ENCODE measurements at regions of chrX and their contacts with region 1.

Region 1: DNA sequence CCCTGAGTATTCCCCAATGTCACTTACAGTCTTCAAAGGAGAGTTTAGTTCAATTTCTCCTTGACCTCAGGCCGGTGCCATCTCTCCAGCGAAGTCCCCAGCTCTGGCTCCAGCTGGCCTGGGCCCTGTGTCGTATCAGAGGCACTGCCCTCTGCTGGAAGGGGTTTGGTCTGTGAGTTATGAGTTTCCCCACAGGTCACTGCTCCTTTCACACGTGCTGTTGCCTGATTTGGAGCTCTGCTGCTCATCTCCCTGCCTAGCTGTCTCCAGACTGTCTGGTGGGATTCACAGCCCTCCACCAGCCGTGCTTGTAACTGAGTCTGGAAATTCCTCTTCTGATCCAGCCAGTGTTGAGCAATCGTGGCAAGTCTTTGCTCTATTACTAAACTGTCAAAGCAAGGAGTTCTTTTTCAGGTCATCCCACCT is at the start of gene RAP2C:
- DNase-seq: peak; percentile 76
- ATAC-seq: peak; percentile 33
- H3K4me3 Mint-ChIP-seq: peak within 1 kb of the TSS; percentile 87
- H3K27ac Mint-ChIP-seq: peak within 1 kb of the TSS; percentile 92
- H3K4me1 Mint-ChIP-seq: peaks cover 13% of the 10 kb centered on the region
- H3K27me3 Mint-ChIP-seq: no peaks in the 10 kb centered on the region
- total RNA-seq, gene RAP2C: 28.3 to 31.3 TPM

Region 2: DNA sequence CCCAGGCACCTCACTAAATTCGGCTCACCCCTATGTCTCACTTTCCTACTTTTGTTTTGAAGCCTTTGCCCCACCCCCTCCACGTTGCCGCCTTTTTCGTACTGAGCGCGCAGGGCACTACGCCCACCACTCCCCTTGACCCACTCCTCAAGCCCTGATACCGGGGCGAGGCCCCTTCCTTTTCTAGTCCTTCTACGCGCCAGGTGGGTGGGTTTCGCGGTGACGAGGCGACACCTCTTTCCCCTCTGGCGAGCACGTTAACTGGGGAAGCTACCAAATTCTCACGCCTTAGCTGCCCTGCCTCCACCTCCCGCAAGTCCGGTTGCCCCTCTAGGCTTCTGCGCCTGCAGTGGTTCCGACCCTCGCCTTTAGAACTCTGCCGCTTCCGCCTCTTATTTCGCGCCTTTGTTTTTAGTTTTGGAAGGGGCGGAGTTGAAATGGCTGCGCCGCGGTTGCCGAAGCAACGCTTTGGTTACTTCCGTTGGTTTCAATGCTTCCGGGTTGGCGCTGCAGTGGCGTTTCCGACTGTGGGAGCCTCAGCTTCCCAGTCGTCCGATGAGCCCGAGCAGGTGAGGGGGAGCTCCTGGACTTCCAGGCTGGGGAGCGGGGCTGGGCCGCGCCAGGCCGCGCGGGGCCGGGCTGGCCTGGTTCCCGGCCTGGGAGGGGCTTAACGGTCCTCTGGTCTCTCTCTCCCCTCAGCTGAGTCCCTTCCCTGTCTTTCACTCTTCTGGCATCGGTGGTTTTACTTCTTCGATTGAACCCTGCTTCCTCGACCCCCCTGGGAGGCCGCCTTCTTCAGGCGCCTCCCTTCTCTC is 1879.7 kb before region 1 on chrX and contains the start of gene SLC25A14:
- CTCF ChIA-PET with region 1: no interaction called
- POLR2A ChIA-PET with region 1: no interaction called
- intact Hi-C with region 1: loop called in 1 of 2 experiments (anchors 5 kb)
- DNase-seq: peak; percentile 82
- ATAC-seq: peak; percentile 88
- H3K4me3 Mint-ChIP-seq: peak within 1 kb of the TSS; percentile 87
- H3K27ac Mint-ChIP-seq: peak within 1 kb of the TSS; percentile 94
- H3K4me1 Mint-ChIP-seq: peaks cover 14% of the 10 kb centered on the region
- H3K27me3 Mint-ChIP-seq: no peaks in the 10 kb centered on the region
- total RNA-seq, gene SLC25A14: 9.6 to 11.0 TPM

Region 3: DNA sequence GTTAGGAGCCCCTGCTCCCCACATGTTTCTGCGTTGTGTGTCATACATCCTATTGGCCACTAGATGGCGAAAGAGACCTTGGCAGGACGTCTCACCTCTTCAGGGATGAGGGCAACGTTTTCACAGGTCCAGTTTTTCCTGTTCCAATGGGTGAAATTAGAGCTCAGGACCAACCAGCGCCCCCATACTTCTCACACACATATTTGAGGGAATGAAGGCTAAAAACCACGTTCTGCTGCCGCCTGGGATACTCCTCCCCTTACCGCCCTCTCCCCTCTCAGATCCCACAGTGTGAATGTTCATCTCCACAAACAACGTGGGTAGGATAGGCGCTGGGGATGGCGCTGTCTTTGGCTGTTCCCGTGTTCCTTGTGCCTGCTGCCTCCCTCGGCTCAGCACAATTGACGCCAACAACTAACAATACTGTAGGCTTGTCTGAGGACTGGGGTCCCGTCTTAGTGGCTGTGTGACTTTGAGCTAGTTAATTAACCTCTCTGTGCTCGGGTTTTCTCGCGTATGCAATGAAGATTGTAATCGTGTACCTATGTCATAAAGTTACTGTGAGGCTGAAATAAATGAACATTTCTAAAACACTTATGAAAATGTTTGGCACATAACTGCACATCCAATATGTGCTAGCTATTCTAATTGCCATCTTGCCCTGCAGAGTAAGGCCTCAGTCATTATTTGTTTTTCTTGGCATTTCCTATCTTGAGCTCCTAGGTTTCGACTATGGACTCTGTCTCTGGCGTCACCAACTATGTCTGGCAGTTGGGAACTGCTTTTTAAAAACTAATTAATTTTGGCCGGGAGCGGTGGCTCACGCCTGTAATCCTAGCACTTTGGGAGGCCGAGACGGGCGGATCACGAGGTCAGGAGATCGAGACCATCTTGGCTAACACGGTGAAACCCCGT is 377.6 kb before region 1 on chrX:
- CTCF ChIA-PET with region 1: interaction called, 5 read pairs
- POLR2A ChIA-PET with region 1: no interaction called
- intact Hi-C with region 1: loop called in 1 of 2 experiments (anchors 1 kb)
- DNase-seq: peak; percentile 36
- ATAC-seq: peak; percentile 75
- H3K4me3 Mint-ChIP-seq: no peak overlapping the region
- H3K27ac Mint-ChIP-seq: no peak overlapping the region
- H3K4me1 Mint-ChIP-seq: peaks cover 6% of the 10 kb centered on the region
- H3K27me3 Mint-ChIP-seq: no peaks in the 10 kb centered on the region

Region 4: GRCh38 chrX:132092439-132093065 is 126.8 kb before region 1 on chrX:
- CTCF ChIA-PET with region 1: interaction called, 17 read pairs
- POLR2A ChIA-PET with region 1: no interaction called
- intact Hi-C with region 1: loop called (anchors 1 to 2 kb)
- DNase-seq: peak; percentile 71
- ATAC-seq: peak; percentile 86
- H3K4me3 Mint-ChIP-seq: no peak overlapping the region
- H3K27ac Mint-ChIP-seq: no peak overlapping the region
- H3K4me1 Mint-ChIP-seq: peaks cover 10% of the 10 kb centered on the region
- H3K27me3 Mint-ChIP-seq: peaks cover 2% of the 10 kb centered on the region

Region 5: GRCh38 chrX:132257116-132257515 is 37.8 kb after region 1 on chrX:
- CTCF ChIA-PET with region 1: no interaction called
- POLR2A ChIA-PET with region 1: no interaction called
- intact Hi-C with region 1: no loop called
- DNase-seq: no peak
- ATAC-seq: no peak
- H3K4me3 Mint-ChIP-seq: no peak overlapping the region
- H3K27ac Mint-ChIP-seq: no peak overlapping the region
- H3K4me1 Mint-ChIP-seq: peaks cover under 1% of the 10 kb centered on the region
- H3K27me3 Mint-ChIP-seq: no peaks in the 10 kb centered on the region

Region 6: GRCh38 chrX:132488819-132489577 is 269.6 kb after region 1 on chrX and contains the start of gene MBNL3:
- CTCF ChIA-PET with region 1: no interaction called
- POLR2A ChIA-PET with region 1: interaction called, 3 read pairs
- intact Hi-C with region 1: loop called (anchors 1 to 5 kb)
- DNase-seq: peak; percentile 76
- ATAC-seq: peak; percentile 67
- H3K4me3 Mint-ChIP-seq: peak within 1 kb of the TSS; percentile 86
- H3K27ac Mint-ChIP-seq: peak within 1 kb of the TSS; percentile 98
- H3K4me1 Mint-ChIP-seq: peaks cover 42% of the 10 kb centered on the region
- H3K27me3 Mint-ChIP-seq: no peaks in the 10 kb centered on the region
- total RNA-seq, gene MBNL3: 15.3 to 19.3 TPM

Region 7: GRCh38 chrX:132559101-132559500 is 339.7 kb after region 1 on chrX:
- CTCF ChIA-PET with region 1: no interaction called
- POLR2A ChIA-PET with region 1: no interaction called
- intact Hi-C with region 1: no loop called
- DNase-seq: no peak
- ATAC-seq: no peak
- H3K4me3 Mint-ChIP-seq: no peak overlapping the region
- H3K27ac Mint-ChIP-seq: no peak overlapping the region
- H3K4me1 Mint-ChIP-seq: no peaks in the 10 kb centered on the region
- H3K27me3 Mint-ChIP-seq: no peaks in the 10 kb centered on the region

Region 8: DNA sequence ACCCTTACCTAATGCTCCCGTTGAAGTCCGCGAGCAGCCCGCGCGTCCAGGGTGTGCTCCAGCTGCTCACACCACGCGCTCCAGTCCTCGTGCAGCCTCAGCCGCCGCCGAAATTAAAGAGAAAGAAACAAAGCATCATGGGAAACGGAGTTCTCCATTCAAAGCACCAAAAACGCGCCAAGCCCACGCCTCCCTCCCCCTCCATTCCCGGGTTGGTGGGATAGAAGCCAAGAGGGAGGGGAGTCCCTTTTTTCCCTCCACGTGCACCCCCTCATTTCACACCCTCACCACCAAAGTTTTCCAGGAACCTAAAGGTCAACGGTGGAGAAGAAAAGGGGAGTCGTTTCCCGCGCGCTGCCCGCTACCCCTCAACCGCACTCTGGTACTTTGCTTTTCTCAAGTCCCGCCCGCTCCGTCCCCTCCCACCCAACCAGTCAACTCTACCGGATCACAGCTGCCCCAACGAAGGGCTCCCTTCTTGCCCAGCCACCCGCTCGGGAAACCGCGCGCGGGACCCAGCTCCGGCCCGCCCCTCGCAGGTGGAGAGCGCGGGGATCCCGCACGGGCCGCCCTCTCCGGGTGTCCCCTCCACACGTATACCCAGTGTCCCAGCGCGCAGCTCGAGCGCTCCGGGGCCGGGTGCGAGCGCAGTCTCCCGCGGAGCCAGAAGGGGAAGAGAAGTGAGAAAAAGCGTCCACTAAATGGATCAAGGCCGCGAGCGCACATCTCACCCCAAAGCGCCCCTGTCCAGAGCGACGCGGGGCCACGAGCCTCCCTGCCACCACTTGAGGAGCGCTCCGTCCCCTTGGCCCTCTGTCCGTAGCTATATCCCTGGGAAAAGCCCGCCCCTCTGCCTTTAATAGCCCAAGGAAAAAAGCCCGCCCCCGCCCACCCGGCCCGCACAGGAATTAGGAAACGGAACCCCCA is 1952.6 kb after region 1 on chrX:
- CTCF ChIA-PET with region 1: no interaction called
- POLR2A ChIA-PET with region 1: no interaction called
- intact Hi-C with region 1: loop called in 1 of 2 experiments (anchors 10 kb)
- DNase-seq: peak; percentile 70
- ATAC-seq: peak; percentile 61
- H3K4me3 Mint-ChIP-seq: peak overlapping the region; percentile 82
- H3K27ac Mint-ChIP-seq: peak overlapping the region; percentile 89
- H3K4me1 Mint-ChIP-seq: peaks cover 17% of the 10 kb centered on the region
- H3K27me3 Mint-ChIP-seq: peaks cover 10% of the 10 kb centered on the region

Measured in activated CD4-positive, alpha-beta T cell treated with anti-CD3 and anti-CD28 coated beads for 36 hours (primary cell).